PC-3 (cell line): ENCODE measurements at regions of chr1 and their contacts with region 1.

Region 1: GRCh38 chr1:59971464-59971911 is 44.9 kb upstream of the CYP2J2 start:
- DNase-seq: peak; percentile 76
- ATAC-seq: peak; percentile 86
- H3K4me3 ChIP-seq: peak overlapping the region; percentile 48; the same call in 1 of the 2 replicates
- H3K27ac ChIP-seq: no peak overlapping the region
- H3K4me1 ChIP-seq: no peaks in the 10 kb centered on the region; the same call in 1 of the 2 replicates
- H3K27me3 ChIP-seq: peaks cover 41% of the 10 kb centered on the region
- CTCF ChIP-seq: peak; percentile 95

Region 2: GRCh38 chr1:60017508-60018205 is 46.2 kb after region 1 on chr1:
- CTCF ChIA-PET with region 1: no interaction called
- POLR2A ChIA-PET with region 1: no interaction called
- intact Hi-C with region 1: no loop called
- DNase-seq: no peak
- ATAC-seq: no peak
- H3K4me3 ChIP-seq: no peak overlapping the region
- H3K27ac ChIP-seq: no peak overlapping the region
- H3K4me1 ChIP-seq: no peaks in the 10 kb centered on the region
- H3K27me3 ChIP-seq: peaks cover 37% of the 10 kb centered on the region
- CTCF ChIP-seq: no peak

Region 3: DNA sequence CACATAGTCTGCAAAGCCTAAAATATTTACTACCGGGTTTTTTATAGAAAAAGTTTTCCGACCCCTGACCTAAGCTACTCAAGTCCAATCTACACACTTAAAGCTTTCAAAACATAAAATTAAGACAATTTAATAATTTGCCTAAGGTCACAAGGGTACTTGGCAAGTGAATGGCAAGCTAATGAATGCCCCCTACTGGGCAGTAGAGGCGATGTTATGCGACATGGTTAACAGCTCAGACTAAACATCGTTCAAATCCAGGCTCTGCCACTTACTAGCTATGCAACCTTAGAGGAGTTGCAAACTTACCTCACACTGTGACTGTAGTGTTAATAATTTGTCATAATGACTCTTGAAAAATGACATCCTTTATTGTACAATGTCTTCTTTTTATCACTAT is 793.7 kb after region 1 on chr1:
- CTCF ChIA-PET with region 1: interaction called, 3 read pairs
- POLR2A ChIA-PET with region 1: no interaction called
- intact Hi-C with region 1: loop called (anchors 10 kb)
- DNase-seq: peak; percentile 71
- ATAC-seq: peak; percentile 69
- H3K4me3 ChIP-seq: no peak overlapping the region
- H3K27ac ChIP-seq: no peak overlapping the region
- H3K4me1 ChIP-seq: no peaks in the 10 kb centered on the region
- H3K27me3 ChIP-seq: peaks cover 19% of the 10 kb centered on the region; the same call in 1 of the 2 replicates
- CTCF ChIP-seq: peak; percentile 88